ENCODE measurements at regions of chr4 and their contacts with region 1.

Region 1: DNA sequence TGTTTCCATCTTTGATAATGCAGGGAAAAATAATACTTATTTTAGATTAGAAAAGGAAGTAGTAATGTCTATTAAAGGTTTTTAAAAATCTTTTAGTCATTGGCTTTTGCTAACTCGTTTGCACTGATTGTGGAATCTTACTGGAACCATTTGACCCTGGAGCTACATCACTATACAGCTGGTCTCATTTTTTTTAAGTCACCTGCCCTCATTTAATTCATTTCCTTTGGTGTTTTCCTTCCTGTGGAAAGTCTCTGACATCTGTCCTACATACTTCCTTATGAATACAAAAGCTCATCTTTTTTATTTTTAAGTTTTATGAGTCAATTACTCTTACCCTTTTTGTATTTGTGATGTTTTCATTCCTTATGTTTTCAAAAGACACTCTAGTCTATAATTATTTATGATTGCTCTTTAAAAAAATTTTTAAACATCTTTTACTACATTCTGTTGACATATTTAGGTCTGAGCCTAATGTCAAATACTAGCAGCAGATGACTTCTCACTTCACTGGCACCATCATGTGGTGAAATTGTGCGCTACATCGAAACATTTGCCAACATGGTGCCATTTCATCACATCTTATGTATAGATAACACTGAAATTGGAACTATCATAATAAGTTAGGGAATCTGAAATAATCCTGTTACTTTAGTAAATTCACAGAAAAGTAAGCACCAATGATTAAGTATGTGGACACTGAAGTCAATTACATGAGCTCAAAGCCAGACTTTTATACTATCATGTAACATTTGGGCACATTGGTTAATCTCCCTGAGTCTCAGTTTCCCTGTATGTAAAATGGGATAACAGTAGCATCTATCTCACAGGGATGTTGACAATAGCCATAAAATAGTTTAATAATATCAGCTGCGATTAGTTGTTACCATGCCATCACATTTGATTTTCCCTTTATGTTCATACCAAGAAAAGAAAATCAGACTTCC is 9.4 kb upstream of the MMAA start:
- DNase-seq: peak; percentile 91
- H3K4me3 ChIP-seq: no peak overlapping the region
- H3K27ac ChIP-seq: no peak overlapping the region
- H3K4me1 ChIP-seq: peaks cover 8% of the 10 kb centered on the region
- H3K27me3 ChIP-seq: peaks cover 0 to 10% of the 10 kb centered on the region in 2 experiments
- CTCF ChIP-seq: peak; percentile 60 to 67
- POLR2A ChIP-seq: no peak

Region 2: GRCh38 chr4:145154573-145154972 is 455.2 kb before region 1 on chr4:
- CTCF ChIA-PET with region 1: interaction called, 24 read pairs
- POLR2A ChIA-PET with region 1: no interaction called
- dilution Hi-C with region 1: no loop called
- intact Hi-C with region 1: loop called (anchors 1 kb)
- DNase-seq: peak; percentile 73
- H3K4me3 ChIP-seq: no peak overlapping the region
- H3K27ac ChIP-seq: peak overlapping the region; percentile 46
- H3K4me1 ChIP-seq: peaks cover 28% of the 10 kb centered on the region
- H3K27me3 ChIP-seq: no peaks in the 10 kb centered on the region
- CTCF ChIP-seq: peak; percentile 53 to 66
- POLR2A ChIP-seq: no peak

Region 3: GRCh38 chr4:145216535-145216934 is 393.2 kb before region 1 on chr4:
- CTCF ChIA-PET with region 1: interaction called, 197 read pairs
- POLR2A ChIA-PET with region 1: no interaction called
- dilution Hi-C with region 1: no loop called
- intact Hi-C with region 1: loop called (anchors 1 kb)
- DNase-seq: peak; percentile 64
- H3K4me3 ChIP-seq: no peak overlapping the region
- H3K27ac ChIP-seq: no peak overlapping the region
- H3K4me1 ChIP-seq: peaks cover 4% of the 10 kb centered on the region
- H3K27me3 ChIP-seq: peaks cover 4 to 5% of the 10 kb centered on the region in 2 experiments
- CTCF ChIP-seq: peak; percentile 28 to 34
- POLR2A ChIP-seq: no peak

Region 4: DNA sequence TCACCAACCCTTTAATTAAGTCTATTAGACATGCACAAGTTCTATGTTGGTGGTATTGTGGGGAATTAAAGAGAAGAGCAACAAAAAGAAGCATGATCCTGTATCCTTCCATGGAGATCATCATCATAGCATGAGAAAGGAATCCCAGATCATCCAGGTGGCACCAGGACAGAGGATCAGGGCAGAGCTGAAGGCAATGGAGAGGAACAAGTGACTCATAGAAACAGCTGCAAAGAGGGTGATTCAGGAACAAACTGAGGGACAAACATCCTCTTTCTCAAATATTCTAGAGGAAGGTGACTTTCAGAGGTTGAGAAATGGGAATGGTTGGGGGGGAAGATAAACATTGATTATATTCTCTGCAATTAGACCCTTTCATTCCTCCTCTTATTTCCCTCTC is 323.8 kb before region 1 on chr4:
- CTCF ChIA-PET with region 1: no interaction called
- POLR2A ChIA-PET with region 1: no interaction called
- dilution Hi-C with region 1: no loop called
- intact Hi-C with region 1: loop called (anchors 1 kb)
- DNase-seq: peak; percentile 65
- H3K4me3 ChIP-seq: no peak overlapping the region
- H3K27ac ChIP-seq: peak overlapping the region; percentile 8
- H3K4me1 ChIP-seq: peaks cover 29% of the 10 kb centered on the region
- H3K27me3 ChIP-seq: no peaks in the 10 kb centered on the region
- CTCF ChIP-seq: no peak
- POLR2A ChIP-seq: no peak

Region 5: GRCh38 chr4:145545538-145546174 is 64.1 kb before region 1 on chr4:
- CTCF ChIA-PET with region 1: interaction called, 11 read pairs
- POLR2A ChIA-PET with region 1: no interaction called
- dilution Hi-C with region 1: no loop called
- intact Hi-C with region 1: no loop called
- DNase-seq: peak; percentile 100
- H3K4me3 ChIP-seq: peak overlapping the region in 1 of 3 experiments; percentile 58
- H3K27ac ChIP-seq: peak overlapping the region; percentile 98
- H3K4me1 ChIP-seq: peaks cover 43% of the 10 kb centered on the region
- H3K27me3 ChIP-seq: no peaks in the 10 kb centered on the region
- CTCF ChIP-seq: no peak
- POLR2A ChIP-seq: peak; percentile 73

Region 6: DNA sequence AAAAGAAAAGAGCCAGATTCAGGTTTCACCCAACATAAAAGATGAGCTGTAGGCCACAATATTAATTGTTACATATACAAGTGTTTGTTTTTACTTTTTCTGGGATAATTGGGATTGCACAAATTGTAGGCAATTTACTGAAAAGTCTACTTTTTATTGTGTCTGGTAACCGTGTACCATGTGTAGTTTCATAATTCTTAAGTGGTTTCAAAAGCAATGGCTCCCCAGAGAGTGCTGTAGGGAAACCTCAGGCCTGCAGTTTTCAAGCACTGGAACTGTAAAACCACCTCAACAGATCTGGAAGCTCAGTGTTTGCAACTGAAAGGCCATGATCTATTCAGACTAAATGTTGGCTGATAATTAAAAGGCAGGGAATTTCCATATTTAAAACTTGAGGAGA is 44.4 kb before region 1 on chr4:
- CTCF ChIA-PET with region 1: interaction called, 10 read pairs
- POLR2A ChIA-PET with region 1: no interaction called
- dilution Hi-C with region 1: no loop called
- intact Hi-C with region 1: no loop called
- DNase-seq: no peak
- H3K4me3 ChIP-seq: no peak overlapping the region
- H3K27ac ChIP-seq: no peak overlapping the region
- H3K4me1 ChIP-seq: no peaks in the 10 kb centered on the region
- H3K27me3 ChIP-seq: peaks cover 0 to 4% of the 10 kb centered on the region in 2 experiments
- CTCF ChIP-seq: no peak
- POLR2A ChIP-seq: no peak

Measured in endothelial cell of umbilical vein (primary cell).